ENCODE measurements at regions of chr17 and their contacts with region 1.

Region 1: GRCh38 chr17:48830840-48831548 is at the start of gene CALCOCO2:
- DNase-seq: peak; percentile 89 to 92 (median 91)
- H3K4me3 ChIP-seq: peak within 1 kb of the TSS; percentile 51 to 96 (median 87)
- H3K27ac ChIP-seq: peak within 1 kb of the TSS; percentile 85 to 93
- H3K4me1 ChIP-seq: peaks cover 7 to 25% (median 15%) of the 10 kb centered on the region in 4 experiments
- H3K27me3 ChIP-seq: no peaks in the 10 kb centered on the region

Region 2: DNA sequence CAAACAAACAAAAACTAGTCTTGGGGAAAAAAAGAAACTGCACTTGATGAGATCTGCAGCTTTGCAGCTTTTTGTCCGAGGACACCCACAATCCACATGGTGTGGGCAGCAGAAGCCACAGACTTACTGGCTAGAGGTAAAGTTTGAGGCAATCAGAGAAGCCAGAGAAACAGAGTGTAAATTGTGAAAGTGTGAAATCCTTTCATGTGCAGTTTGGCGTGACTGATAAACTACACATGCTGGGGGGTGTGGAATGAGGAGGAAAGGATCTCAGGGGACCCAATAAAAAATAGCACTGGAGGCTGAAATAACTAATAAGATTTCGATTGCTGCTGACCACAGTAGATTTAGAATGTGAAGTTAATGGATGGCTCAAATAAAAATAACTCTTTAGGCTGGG is 60.0 kb before region 1 on chr17:
- CTCF ChIA-PET with region 1: no interaction called
- POLR2A ChIA-PET with region 1: no interaction called
- DNase-seq: no peak
- H3K4me3 ChIP-seq: no peak overlapping the region
- H3K27ac ChIP-seq: no peak overlapping the region
- H3K4me1 ChIP-seq: peaks cover 0 to 7% (median 0%) of the 10 kb centered on the region in 4 experiments
- H3K27me3 ChIP-seq: peaks cover 0 to 5% (median 0%) of the 10 kb centered on the region in 5 experiments

Region 3: GRCh38 chr17:48841395-48841831 is 10.4 kb after region 1 on chr17:
- CTCF ChIA-PET with region 1: interaction called, 1,090 read pairs
- POLR2A ChIA-PET with region 1: interaction called, 3 read pairs
- DNase-seq: peak; percentile 84 to 96 (median 94)
- H3K4me3 ChIP-seq: peak overlapping the region in 5 of 7 experiments; percentile 23 to 77 (median 39)
- H3K27ac ChIP-seq: peak overlapping the region in 1 of 2 experiments; percentile 40
- H3K4me1 ChIP-seq: peaks cover 12 to 57% (median 47%) of the 10 kb centered on the region in 4 experiments
- H3K27me3 ChIP-seq: no peaks in the 10 kb centered on the region

Region 4: GRCh38 chr17:48901241-48901640 is 70.2 kb after region 1 on chr17:
- CTCF ChIA-PET with region 1: no interaction called
- POLR2A ChIA-PET with region 1: no interaction called
- DNase-seq: no peak
- H3K4me3 ChIP-seq: no peak overlapping the region
- H3K27ac ChIP-seq: no peak overlapping the region
- H3K4me1 ChIP-seq: no peaks in the 10 kb centered on the region
- H3K27me3 ChIP-seq: no peaks in the 10 kb centered on the region

Region 5: DNA sequence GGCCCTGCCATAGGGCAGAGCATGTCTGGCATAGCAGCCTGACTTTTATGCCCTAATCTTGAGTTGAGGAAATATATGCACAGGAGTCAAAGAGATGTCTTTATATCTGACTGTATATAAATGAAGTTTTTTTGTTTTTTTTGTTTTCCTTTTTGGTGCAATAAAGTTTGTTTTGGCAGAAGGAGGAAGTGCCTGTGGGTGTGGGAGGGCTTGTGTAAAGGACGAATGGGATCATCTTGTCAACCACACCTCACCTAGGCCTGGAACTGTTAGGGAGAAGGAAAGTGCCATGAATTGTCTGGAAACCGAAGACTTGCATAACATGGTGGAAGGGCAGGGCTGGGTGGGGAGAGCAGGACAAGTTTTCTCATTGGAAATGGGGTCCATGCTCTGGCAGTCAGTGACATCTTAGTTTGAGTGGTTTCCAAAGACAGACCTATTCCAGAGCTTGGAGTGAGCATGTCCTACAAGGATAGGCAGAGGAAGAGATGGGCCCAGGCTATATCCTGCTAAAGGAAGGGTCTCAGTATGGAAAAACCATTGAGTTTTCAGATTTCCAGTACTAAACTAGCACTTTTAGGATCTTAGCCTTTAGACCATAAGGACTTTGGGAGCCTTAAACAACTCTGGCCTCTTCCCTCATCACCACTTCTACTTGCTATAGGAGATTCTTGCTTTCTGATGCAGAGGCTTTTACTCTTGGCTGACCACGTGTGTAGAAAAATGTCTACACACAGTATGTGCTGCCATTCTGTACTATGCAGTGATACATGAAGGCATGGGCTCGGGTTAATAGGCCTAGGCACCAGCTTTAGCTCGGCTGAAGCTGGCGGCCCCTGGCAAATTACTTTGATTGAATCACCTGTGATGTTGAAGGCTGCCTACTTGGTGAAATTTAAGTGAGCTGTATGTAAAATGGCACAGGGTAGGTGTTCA is 98.2 kb after region 1 on chr17:
- CTCF ChIA-PET with region 1: no interaction called
- POLR2A ChIA-PET with region 1: no interaction called
- DNase-seq: peak in 1 of 3 donors; percentile 16
- H3K4me3 ChIP-seq: no peak overlapping the region
- H3K27ac ChIP-seq: no peak overlapping the region
- H3K4me1 ChIP-seq: no peaks in the 10 kb centered on the region
- H3K27me3 ChIP-seq: no peaks in the 10 kb centered on the region